ENCODE measurements at regions of chr9 and their contacts with region 1.

Region 1: GRCh38 chr9:77841739-77842386 is 189.7 kb downstream of the GNAQ start:
- DNase-seq: no peak
- H3K4me3 ChIP-seq: no peak overlapping the region
- H3K27ac ChIP-seq: no peak overlapping the region
- H3K4me1 ChIP-seq: peaks cover 0 to 52% (median 30%) of the 10 kb centered on the region in 3 donors
- H3K27me3 ChIP-seq: no peaks in the 10 kb centered on the region
- CTCF ChIP-seq: peak in 2 of 6 experiments; percentile 22 to 28
- POLR2A ChIP-seq: no peak

Region 2: GRCh38 chr9:78035383-78035993 is 193.6 kb after region 1 on chr9:
- intact Hi-C with region 1: loop called (anchors 10 kb)
- DNase-seq: no peak
- H3K4me3 ChIP-seq: no peak overlapping the region
- H3K27ac ChIP-seq: peak overlapping the region in 3 of 4 donors; percentile 18 to 45 (median 42)
- H3K4me1 ChIP-seq: peaks cover 0 to 32% (median 14%) of the 10 kb centered on the region in 3 donors
- H3K27me3 ChIP-seq: no peaks in the 10 kb centered on the region
- CTCF ChIP-seq: peak; percentile 77 to 86 (median 80)
- POLR2A ChIP-seq: no peak

Region 3: DNA sequence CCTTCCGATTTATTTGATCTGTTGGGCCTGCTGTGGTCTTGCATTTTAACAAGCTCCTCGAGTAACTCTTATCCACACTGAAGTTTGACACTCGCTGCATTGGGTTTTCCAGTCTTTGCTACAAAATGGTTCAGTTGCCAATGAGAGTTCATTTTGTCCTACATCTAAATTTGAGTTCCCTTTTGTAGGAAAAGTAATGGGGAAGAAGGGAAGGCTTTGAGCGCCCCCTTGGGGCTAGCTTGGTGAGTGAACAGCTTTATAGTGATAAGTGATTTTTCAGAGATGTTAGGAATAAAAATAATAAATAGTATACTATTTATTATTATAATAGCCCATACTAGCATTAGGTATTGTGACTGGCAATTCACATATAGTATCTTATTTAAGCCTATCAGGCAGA is 279.6 kb after region 1 on chr9:
- intact Hi-C with region 1: no loop called
- DNase-seq: no peak
- H3K4me3 ChIP-seq: no peak overlapping the region
- H3K27ac ChIP-seq: no peak overlapping the region
- H3K4me1 ChIP-seq: peaks cover 0 to 8% (median 4%) of the 10 kb centered on the region in 3 donors
- H3K27me3 ChIP-seq: no peaks in the 10 kb centered on the region
- CTCF ChIP-seq: peak in 5 of 6 experiments; percentile 32 to 69 (median 50)
- POLR2A ChIP-seq: no peak